ENCODE measurements at regions of chr16 and their contacts with region 1.

Region 1: GRCh38 chr16:13529193-13529982 is 390.6 kb upstream of the ERCC4 start:
- DNase-seq: no peak
- ATAC-seq: no peak
- H3K4me3 ChIP-seq: no peak overlapping the region
- H3K4me3 Mint-ChIP-seq: no peak overlapping the region
- H3K27ac ChIP-seq: no peak overlapping the region
- H3K27ac Mint-ChIP-seq: no peak overlapping the region
- H3K4me1 ChIP-seq: no peaks in the 10 kb centered on the region
- H3K4me1 Mint-ChIP-seq: no peaks in the 10 kb centered on the region
- H3K27me3 ChIP-seq: no peaks in the 10 kb centered on the region
- H3K27me3 Mint-ChIP-seq: no peaks in the 10 kb centered on the region
- CTCF ChIP-seq: no peak

Region 2: DNA sequence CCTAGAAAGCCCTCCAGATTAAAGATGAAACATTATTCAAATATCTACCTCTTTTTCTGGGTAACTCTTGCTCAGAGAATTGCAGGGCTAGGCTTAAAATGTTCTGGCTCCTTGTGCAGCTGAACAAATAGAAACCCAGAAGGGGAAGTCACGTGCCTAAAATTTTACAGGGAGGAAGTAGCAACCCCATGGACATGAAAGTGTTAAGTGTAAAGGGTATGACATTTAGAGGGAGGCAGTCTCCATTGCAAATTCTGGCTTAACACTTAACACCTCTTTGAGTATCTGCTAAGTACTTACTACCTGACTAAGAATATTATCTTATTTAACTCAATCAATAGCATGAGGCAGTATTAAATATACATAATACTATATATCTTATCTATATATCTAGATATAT is 14.5 kb after region 1 on chr16:
- intact Hi-C with region 1: loop called (anchors 1 kb)
- DNase-seq: no peak
- ATAC-seq: no peak
- H3K4me3 ChIP-seq: no peak overlapping the region
- H3K4me3 Mint-ChIP-seq: no peak overlapping the region
- H3K27ac ChIP-seq: no peak overlapping the region
- H3K27ac Mint-ChIP-seq: no peak overlapping the region
- H3K4me1 ChIP-seq: no peaks in the 10 kb centered on the region
- H3K4me1 Mint-ChIP-seq: no peaks in the 10 kb centered on the region
- H3K27me3 ChIP-seq: no peaks in the 10 kb centered on the region
- H3K27me3 Mint-ChIP-seq: no peaks in the 10 kb centered on the region
- CTCF ChIP-seq: no peak

Region 3: GRCh38 chr16:13727943-13728342 is 198.6 kb after region 1 on chr16:
- intact Hi-C with region 1: no loop called
- DNase-seq: no peak
- ATAC-seq: no peak
- H3K4me3 ChIP-seq: no peak overlapping the region
- H3K4me3 Mint-ChIP-seq: no peak overlapping the region
- H3K27ac ChIP-seq: no peak overlapping the region
- H3K27ac Mint-ChIP-seq: no peak overlapping the region
- H3K4me1 ChIP-seq: no peaks in the 10 kb centered on the region
- H3K4me1 Mint-ChIP-seq: no peaks in the 10 kb centered on the region
- H3K27me3 ChIP-seq: no peaks in the 10 kb centered on the region
- H3K27me3 Mint-ChIP-seq: no peaks in the 10 kb centered on the region
- CTCF ChIP-seq: no peak